Calu3 (cell line): ENCODE measurements at regions of chr5 and their contacts with region 1.

Region 1: DNA sequence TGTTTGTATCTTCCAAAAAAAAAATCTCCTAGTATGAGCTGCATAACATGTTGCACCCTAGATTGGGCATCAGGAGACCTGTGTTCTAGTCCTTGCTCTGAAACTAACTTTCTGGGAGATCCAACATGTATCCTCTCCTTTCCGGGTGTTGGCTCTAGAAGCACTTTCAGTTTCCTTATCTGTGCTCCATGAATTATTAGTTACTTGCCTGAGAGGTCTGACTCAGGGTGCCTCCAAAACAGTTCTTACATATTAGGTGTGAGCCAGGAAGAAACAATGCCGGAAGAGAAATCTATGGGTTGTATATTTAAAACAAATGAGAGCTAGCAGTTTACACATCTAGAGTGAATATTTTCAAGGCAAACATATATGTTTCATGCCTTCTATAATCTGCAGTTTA is 36.7 kb upstream of the SLC36A2 start:
- DNase-seq: no peak
- H3K4me3 Mint-ChIP-seq: no peak overlapping the region
- H3K27ac Mint-ChIP-seq: no peak overlapping the region
- H3K4me1 Mint-ChIP-seq: no peaks in the 10 kb centered on the region
- H3K27me3 Mint-ChIP-seq: peaks cover 40% of the 10 kb centered on the region
- CTCF ChIP-seq: no peak

Region 2: DNA sequence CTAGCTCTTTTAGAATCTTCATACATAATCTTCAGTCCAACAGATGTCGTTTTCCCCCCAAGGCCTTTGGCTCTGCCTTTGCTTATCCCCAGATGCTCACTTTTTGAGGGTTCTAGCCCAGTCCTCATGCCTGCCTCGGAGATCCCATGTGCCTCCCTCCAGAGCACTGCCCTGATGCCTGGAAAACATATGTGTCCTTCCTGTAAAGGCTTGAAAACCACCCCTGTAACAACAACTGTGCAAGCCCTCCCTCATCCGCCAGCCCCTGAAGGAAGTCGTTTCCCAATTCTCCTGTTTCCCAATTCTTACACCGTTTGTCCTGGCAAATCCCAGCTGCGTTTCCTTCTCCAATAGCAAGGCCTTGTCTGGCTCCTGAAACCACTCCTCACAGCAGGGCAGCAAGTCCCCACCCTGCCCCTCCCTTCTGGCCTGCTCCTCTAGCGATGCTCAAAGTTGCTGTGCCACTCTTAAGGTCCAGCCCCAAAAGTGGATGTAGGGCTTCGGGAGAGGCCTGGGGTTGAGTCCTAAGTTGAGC is 115.5 kb after region 1 on chr5:
- CTCF ChIA-PET with region 1: no interaction called
- intact Hi-C with region 1: loop called (anchors 1 kb)
- DNase-seq: no peak
- H3K4me3 Mint-ChIP-seq: no peak overlapping the region
- H3K27ac Mint-ChIP-seq: no peak overlapping the region
- H3K4me1 Mint-ChIP-seq: no peaks in the 10 kb centered on the region
- H3K27me3 Mint-ChIP-seq: no peaks in the 10 kb centered on the region
- CTCF ChIP-seq: no peak